Caco-2 (cell line): ENCODE measurements at regions of chr2 and their contacts with region 1.

Region 1: DNA sequence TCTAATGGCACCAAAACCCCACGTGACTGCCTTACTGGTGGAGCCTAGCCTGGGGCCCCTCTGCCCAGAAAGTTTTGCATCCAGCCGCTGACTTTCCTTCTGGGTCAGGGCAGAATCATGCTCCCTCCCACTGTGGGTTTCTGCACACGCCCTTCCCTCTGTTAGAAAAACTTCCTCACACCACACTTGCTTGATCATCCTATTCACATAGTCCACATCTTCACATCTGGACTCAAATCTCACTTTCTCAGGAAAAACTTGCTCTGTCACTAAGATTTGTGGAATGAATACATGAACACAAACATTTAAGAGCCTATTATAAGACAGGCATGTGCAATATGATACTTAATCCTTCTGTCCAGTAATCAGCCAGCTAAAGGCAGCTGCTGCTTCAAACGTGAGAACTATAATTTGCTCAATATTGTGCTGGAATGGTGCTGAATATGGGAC is 274.7 kb downstream of the RND3 start:
- DNase-seq: no peak
- H3K4me3 ChIP-seq: no peak overlapping the region
- H3K4me3 Mint-ChIP-seq: no peak overlapping the region
- H3K27ac Mint-ChIP-seq: peak overlapping the region; percentile 43
- H3K4me1 ChIP-seq: peaks cover 48% of the 10 kb centered on the region
- H3K4me1 Mint-ChIP-seq: peaks cover 21% of the 10 kb centered on the region
- H3K27me3 ChIP-seq: no peaks in the 10 kb centered on the region
- H3K27me3 Mint-ChIP-seq: no peaks in the 10 kb centered on the region
- CTCF ChIP-seq: no peak

Region 2: GRCh38 chr2:149601141-149601796 is 611.5 kb before region 1 on chr2:
- CTCF ChIA-PET with region 1: no interaction called
- POLR2A ChIA-PET with region 1: no interaction called
- intact Hi-C with region 1: no loop called
- DNase-seq: no peak
- H3K4me3 ChIP-seq: no peak overlapping the region
- H3K4me3 Mint-ChIP-seq: no peak overlapping the region
- H3K27ac Mint-ChIP-seq: no peak overlapping the region
- H3K4me1 ChIP-seq: peaks cover 12% of the 10 kb centered on the region; the same call in 1 of the 2 replicates
- H3K4me1 Mint-ChIP-seq: peaks cover 15% of the 10 kb centered on the region
- H3K27me3 ChIP-seq: no peaks in the 10 kb centered on the region
- H3K27me3 Mint-ChIP-seq: no peaks in the 10 kb centered on the region
- CTCF ChIP-seq: no peak

Region 3: GRCh38 chr2:150174971-150175421 is 37.8 kb before region 1 on chr2:
- CTCF ChIA-PET with region 1: no interaction called
- POLR2A ChIA-PET with region 1: no interaction called
- intact Hi-C with region 1: loop called (anchors 1 kb)
- DNase-seq: no peak
- H3K4me3 ChIP-seq: no peak overlapping the region
- H3K4me3 Mint-ChIP-seq: no peak overlapping the region
- H3K27ac Mint-ChIP-seq: no peak overlapping the region
- H3K4me1 ChIP-seq: peaks cover 22% of the 10 kb centered on the region
- H3K4me1 Mint-ChIP-seq: peaks cover 26% of the 10 kb centered on the region
- H3K27me3 ChIP-seq: no peaks in the 10 kb centered on the region
- H3K27me3 Mint-ChIP-seq: no peaks in the 10 kb centered on the region
- CTCF ChIP-seq: no peak